ENCODE measurements at regions of chr4 and their contacts with region 1.

Region 1: GRCh38 chr4:93791570-93792195 is 36.9 kb upstream of the ATOH1 start:
- H3K4me3 Mint-ChIP-seq: no peak overlapping the region
- H3K27ac Mint-ChIP-seq: no peak overlapping the region
- H3K4me1 Mint-ChIP-seq: no peaks in the 10 kb centered on the region
- H3K27me3 Mint-ChIP-seq: peaks cover 1% of the 10 kb centered on the region

Region 2: GRCh38 chr4:93983140-93983539 is 191.5 kb after region 1 on chr4:
- intact Hi-C with region 1: no loop called
- H3K4me3 Mint-ChIP-seq: no peak overlapping the region
- H3K27ac Mint-ChIP-seq: no peak overlapping the region
- H3K4me1 Mint-ChIP-seq: no peaks in the 10 kb centered on the region
- H3K27me3 Mint-ChIP-seq: no peaks in the 10 kb centered on the region

Region 3: DNA sequence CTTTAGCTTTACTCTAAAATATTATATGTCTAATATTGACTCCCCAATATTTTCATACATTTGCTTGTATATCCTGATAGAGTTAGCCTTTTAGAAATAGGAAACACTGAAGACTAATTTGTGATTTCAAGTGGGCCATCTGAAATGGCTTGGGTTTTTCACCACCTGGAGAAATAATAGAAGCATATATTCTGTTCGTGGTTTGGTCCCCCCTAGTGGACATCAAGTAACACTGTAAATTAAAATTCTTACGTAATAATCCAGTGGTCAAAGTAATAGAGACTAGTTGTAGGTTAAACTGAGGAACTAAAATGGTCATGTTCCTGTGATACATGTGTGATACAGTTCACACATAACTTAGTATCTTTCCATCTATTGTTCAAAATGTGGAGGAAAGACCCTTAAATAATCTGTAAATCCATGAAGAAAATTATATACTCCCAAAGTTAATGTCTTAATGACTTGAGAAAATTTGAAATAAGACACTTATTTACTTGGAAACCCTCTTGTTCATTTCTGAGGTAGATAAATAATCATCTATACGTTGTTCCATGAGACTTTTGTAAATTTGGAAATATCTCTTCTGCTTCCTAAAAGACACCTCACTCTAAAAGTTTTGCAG is 336.1 kb after region 1 on chr4:
- intact Hi-C with region 1: loop called (anchors 1 kb)
- H3K4me3 Mint-ChIP-seq: no peak overlapping the region
- H3K27ac Mint-ChIP-seq: no peak overlapping the region
- H3K4me1 Mint-ChIP-seq: no peaks in the 10 kb centered on the region
- H3K27me3 Mint-ChIP-seq: no peaks in the 10 kb centered on the region

Region 4: GRCh38 chr4:94202769-94203168 is 411.1 kb after region 1 on chr4:
- intact Hi-C with region 1: loop called (anchors 10 kb)
- H3K4me3 Mint-ChIP-seq: no peak overlapping the region
- H3K27ac Mint-ChIP-seq: no peak overlapping the region
- H3K4me1 Mint-ChIP-seq: no peaks in the 10 kb centered on the region
- H3K27me3 Mint-ChIP-seq: peaks cover 3% of the 10 kb centered on the region

Region 5: GRCh38 chr4:94256828-94257227 is 465.1 kb after region 1 on chr4:
- intact Hi-C with region 1: loop called (anchors 5 kb)
- H3K4me3 Mint-ChIP-seq: no peak overlapping the region
- H3K27ac Mint-ChIP-seq: no peak overlapping the region
- H3K4me1 Mint-ChIP-seq: no peaks in the 10 kb centered on the region
- H3K27me3 Mint-ChIP-seq: no peaks in the 10 kb centered on the region

Region 6: GRCh38 chr4:94390804-94391410 is 599.2 kb after region 1 on chr4:
- intact Hi-C with region 1: loop called (anchors 2 kb)
- H3K4me3 Mint-ChIP-seq: no peak overlapping the region
- H3K27ac Mint-ChIP-seq: no peak overlapping the region
- H3K4me1 Mint-ChIP-seq: no peaks in the 10 kb centered on the region
- H3K27me3 Mint-ChIP-seq: no peaks in the 10 kb centered on the region